AG04450 (cell line): ENCODE measurements at regions of chr16 and their contacts with region 1.

Region 1: DNA sequence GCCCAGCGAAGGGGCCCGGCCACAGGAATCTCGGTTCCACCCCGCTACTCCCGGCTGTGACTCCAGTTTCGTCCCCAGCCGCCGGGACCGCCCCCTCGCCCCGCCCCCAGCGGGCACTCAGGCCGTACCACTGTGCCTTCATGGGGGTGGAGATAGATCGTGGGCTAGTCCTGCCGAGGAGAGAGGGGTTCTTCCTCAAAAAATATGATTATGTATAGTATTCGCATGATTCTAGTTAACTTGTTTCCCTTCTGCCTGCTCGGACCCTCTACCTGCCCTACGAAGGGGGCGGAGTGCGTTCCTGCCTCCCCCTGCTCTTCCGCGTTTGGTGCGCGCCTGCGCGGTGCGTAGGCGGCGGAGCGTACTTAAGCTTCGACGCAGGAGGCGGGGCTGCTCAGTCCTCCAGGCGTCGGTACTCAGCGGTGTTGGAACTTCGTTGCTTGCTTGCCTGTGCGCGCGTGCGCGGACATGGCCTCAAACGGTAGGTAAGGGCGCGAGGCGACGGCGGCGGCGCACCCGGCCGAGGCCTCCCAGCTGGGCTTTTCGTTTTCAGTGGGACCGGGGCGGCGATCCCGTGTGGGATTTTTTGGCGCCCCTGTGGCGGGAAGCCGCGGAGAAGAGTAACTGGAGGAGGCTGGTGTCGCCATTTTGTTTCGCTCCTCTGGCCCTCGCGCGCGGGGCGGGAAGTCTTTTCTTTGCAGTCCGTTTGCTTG is at the start of gene FUS:
- DNase-seq: peak; percentile 85
- H3K4me3 ChIP-seq: peak within 1 kb of the TSS; percentile 95
- H3K27ac ChIP-seq: peak within 1 kb of the TSS; percentile 91
- H3K27me3 ChIP-seq: no peaks in the 10 kb centered on the region
- CTCF ChIP-seq: no peak
- polyA plus RNA-seq, gene FUS: 156 and 166 TPM in 2 replicates

Region 2: GRCh38 chr16:30984669-30985400 is 195.1 kb before region 1 on chr16 and contains the start of gene HSD3B7:
- CTCF ChIA-PET with region 1: interaction called, 3 read pairs
- POLR2A ChIA-PET with region 1: interaction called, 11 read pairs
- DNase-seq: peak; percentile 44
- H3K4me3 ChIP-seq: peak within 1 kb of the TSS; percentile 53
- H3K27ac ChIP-seq: peak within 1 kb of the TSS; percentile 11
- H3K27me3 ChIP-seq: no peaks in the 10 kb centered on the region
- CTCF ChIP-seq: peak; percentile 90
- polyA plus RNA-seq, gene HSD3B7: 6.1 and 9.5 TPM in 2 replicates

Region 3: GRCh38 chr16:31117391-31118197 is 62.3 kb before region 1 on chr16 and contains the start of gene KAT8:
- CTCF ChIA-PET with region 1: no interaction called
- POLR2A ChIA-PET with region 1: interaction called, 40 read pairs
- DNase-seq: peak; percentile 94
- H3K4me3 ChIP-seq: peak within 1 kb of the TSS; percentile 91
- H3K27ac ChIP-seq: peak within 1 kb of the TSS; percentile 96
- H3K27me3 ChIP-seq: no peaks in the 10 kb centered on the region
- CTCF ChIP-seq: no peak
- polyA plus RNA-seq, gene KAT8: 23.0 and 24.7 TPM in 2 replicates

Region 4: DNA sequence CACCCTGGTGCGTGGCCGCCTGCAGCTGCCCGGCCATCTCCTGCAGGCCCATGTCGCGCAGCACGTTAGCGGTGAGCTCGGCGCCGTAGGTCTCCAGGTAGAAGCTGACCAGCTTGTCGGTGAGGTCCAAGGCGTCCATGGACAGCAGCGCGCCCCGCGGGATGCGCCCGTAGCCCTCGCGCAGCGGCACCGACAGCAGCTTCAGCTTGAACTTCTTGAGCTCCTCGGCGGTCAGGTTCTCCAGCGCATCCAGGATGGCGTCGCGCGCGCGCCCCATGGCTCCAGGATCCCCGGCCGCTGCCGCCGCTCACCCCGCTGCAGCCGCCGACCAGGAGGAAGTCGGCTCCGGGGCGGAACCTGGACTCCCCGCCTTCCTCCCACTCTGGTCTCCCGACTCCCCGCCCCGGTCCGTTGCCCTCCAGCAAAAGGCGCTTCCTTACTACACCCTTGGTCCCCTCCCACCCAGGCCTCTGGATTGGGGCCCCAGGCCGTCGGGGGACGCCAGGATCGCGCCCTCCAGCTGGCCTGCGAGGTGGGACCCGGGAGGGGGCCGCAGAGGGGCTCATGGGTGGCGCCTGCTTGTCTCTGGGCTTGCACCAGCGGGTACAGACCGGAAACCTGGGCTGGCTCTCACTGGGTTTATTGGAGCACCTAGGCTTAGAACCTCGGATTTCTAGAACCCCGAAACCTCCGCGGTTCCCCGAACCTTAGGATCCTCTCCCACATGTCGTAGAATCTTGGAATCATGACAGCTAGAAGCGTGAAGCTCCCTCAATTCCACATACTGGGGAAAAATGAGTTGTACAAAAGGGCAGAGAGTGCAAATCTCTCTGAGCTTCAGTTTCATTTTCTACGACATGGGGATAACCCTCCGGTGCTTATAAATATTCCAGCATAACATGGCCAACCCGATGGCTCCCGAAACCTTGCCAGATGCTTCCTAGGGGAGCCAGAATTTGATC is 22.8 kb after region 1 on chr16 and contains the start of gene PYCARD:
- CTCF ChIA-PET with region 1: no interaction called
- POLR2A ChIA-PET with region 1: interaction called, 43 read pairs
- DNase-seq: no peak
- H3K4me3 ChIP-seq: peak within 1 kb of the TSS; percentile 80
- H3K27ac ChIP-seq: no peak within 1 kb of the TSS
- H3K27me3 ChIP-seq: peaks cover 16% of the 10 kb centered on the region
- CTCF ChIP-seq: no peak
- polyA plus RNA-seq, gene PYCARD: 21.8 and 31.0 TPM in 2 replicates

Region 5: GRCh38 chr16:31344712-31345111 is 164.8 kb after region 1 on chr16:
- CTCF ChIA-PET with region 1: no interaction called
- POLR2A ChIA-PET with region 1: no interaction called
- DNase-seq: no peak
- H3K4me3 ChIP-seq: no peak overlapping the region
- H3K27ac ChIP-seq: no peak overlapping the region
- H3K27me3 ChIP-seq: no peaks in the 10 kb centered on the region
- CTCF ChIP-seq: no peak

Region 6: DNA sequence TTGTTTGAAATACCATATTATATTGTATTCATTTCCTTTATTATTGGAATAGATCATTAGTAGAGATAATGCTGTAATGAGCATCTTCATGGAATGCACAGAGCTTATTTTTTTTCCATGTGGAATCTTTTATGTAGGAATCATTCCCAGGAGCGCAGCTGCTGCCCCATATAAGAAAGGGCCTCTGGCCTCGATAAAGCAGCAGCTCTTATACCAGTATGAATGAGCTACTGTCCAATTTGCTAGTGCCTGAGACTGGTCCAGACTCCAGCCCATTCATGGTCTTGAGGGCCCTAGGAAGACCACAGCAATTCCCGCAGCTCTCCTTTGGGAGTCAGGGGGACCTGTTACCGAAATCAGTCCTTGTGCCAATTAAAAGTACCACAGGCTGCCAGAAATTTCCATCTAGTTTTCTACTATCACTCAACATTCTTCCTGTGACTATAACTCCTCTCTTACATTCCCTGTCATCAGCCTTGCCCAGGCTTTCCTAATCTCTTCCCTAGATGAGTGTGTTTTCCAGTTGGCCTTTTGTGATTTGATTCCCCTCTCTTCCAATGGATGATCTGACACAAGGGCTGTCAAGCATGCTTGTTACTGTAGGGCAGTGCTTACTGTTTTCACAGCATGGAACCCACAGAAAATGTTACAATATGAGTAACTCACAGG is 260.7 kb after region 1 on chr16:
- CTCF ChIA-PET with region 1: interaction called, 3 read pairs
- POLR2A ChIA-PET with region 1: interaction called, 14 read pairs
- DNase-seq: no peak
- H3K4me3 ChIP-seq: no peak overlapping the region
- H3K27ac ChIP-seq: no peak overlapping the region
- H3K27me3 ChIP-seq: peaks cover 2% of the 10 kb centered on the region
- CTCF ChIP-seq: no peak

Region 7: GRCh38 chr16:31458844-31459721 is 279.2 kb after region 1 on chr16 and contains the start of gene ARMC5:
- CTCF ChIA-PET with region 1: no interaction called
- POLR2A ChIA-PET with region 1: interaction called, 22 read pairs
- DNase-seq: peak; percentile 97
- H3K4me3 ChIP-seq: peak within 1 kb of the TSS; percentile 87
- H3K27ac ChIP-seq: peak within 1 kb of the TSS; percentile 99
- H3K27me3 ChIP-seq: no peaks in the 10 kb centered on the region
- CTCF ChIP-seq: peak; percentile 68
- polyA plus RNA-seq, gene ARMC5: 2.9 and 4.2 TPM in 2 replicates